B cell (primary cell): ENCODE measurements at regions of chr12 and their contacts with region 1.

Region 1: GRCh38 chr12:50174971-50175715 is 8.0 kb upstream of the CERS5 start:
- DNase-seq: peak; percentile 73
- ATAC-seq: no peak
- H3K4me3 ChIP-seq: no peak overlapping the region
- H3K4me3 Mint-ChIP-seq: no peak overlapping the region
- H3K27ac ChIP-seq: no peak overlapping the region
- H3K27ac Mint-ChIP-seq: no peak overlapping the region
- H3K4me1 ChIP-seq: no peaks in the 10 kb centered on the region
- H3K4me1 Mint-ChIP-seq: no peaks in the 10 kb centered on the region
- H3K27me3 ChIP-seq: no peaks in the 10 kb centered on the region
- H3K27me3 Mint-ChIP-seq: no peaks in the 10 kb centered on the region
- CTCF ChIP-seq: peak; percentile 93

Region 2: DNA sequence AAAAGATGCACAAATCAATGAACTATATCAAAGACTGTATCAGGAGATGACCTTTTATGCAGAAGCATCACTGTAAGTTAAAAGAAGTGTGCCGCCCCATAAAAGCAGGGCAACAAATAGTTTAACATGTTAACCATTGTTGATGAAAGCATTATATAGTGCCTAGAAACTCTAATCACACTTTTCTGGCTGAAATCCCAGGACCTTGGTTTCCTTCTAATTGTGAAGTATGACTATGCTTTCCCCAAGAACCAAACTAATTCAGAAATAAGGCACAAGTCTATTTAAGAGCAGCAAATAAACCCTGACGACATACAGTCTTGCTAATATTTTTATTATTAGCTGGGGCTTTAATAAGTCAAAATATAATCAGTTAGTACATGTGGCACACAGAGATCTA is 171.5 kb before region 1 on chr12:
- CTCF ChIA-PET with region 1: no interaction called
- POLR2A ChIA-PET with region 1: no interaction called
- intact Hi-C with region 1: no loop called
- DNase-seq: no peak
- ATAC-seq: no peak
- H3K4me3 ChIP-seq: no peak overlapping the region
- H3K4me3 Mint-ChIP-seq: no peak overlapping the region
- H3K27ac ChIP-seq: no peak overlapping the region
- H3K27ac Mint-ChIP-seq: no peak overlapping the region
- H3K4me1 ChIP-seq: peaks cover 3 to 7% of the 10 kb centered on the region in 2 donors
- H3K4me1 Mint-ChIP-seq: peaks cover 13% of the 10 kb centered on the region
- H3K27me3 ChIP-seq: no peaks in the 10 kb centered on the region
- H3K27me3 Mint-ChIP-seq: no peaks in the 10 kb centered on the region
- CTCF ChIP-seq: no peak

Region 3: DNA sequence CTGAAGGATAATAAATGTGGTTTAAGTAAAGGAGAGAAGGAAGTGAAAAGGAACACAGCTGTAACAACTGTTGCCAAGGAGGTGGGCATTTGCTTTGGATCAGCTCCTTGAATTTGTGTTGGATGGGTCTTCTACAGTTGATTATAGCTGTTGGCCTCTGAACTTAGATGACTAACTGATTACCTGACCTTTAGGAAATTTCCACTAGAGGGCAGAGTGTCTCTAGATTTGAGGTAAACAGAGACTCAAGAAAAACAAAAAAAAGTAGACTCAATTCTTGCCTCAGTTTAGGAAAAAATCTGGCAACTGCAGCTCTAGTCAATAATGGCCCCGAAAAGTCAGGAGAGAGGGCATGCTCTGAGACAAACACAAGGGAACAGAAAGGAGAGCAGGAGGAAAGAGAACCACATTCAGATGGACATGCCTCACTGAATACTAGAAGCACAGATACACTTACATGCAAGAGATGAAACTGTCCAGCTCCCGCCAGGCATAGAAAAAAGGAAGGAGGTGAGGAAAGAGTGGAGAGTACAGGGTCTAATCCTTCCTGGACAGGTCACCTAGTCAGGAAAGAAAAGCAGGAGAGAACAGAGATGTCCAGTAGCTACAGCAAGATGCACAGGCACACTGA is 42.5 kb before region 1 on chr12:
- CTCF ChIA-PET with region 1: interaction called, 48 read pairs
- POLR2A ChIA-PET with region 1: no interaction called
- intact Hi-C with region 1: loop called (anchors 1 kb)
- DNase-seq: peak; percentile 42
- ATAC-seq: no peak
- H3K4me3 ChIP-seq: no peak overlapping the region
- H3K4me3 Mint-ChIP-seq: no peak overlapping the region
- H3K27ac ChIP-seq: peak overlapping the region in 1 of 2 donors; percentile 35
- H3K27ac Mint-ChIP-seq: peak overlapping the region; percentile 8
- H3K4me1 ChIP-seq: peaks cover 6 to 7% of the 10 kb centered on the region in 2 donors
- H3K4me1 Mint-ChIP-seq: peaks cover 14% of the 10 kb centered on the region
- H3K27me3 ChIP-seq: no peaks in the 10 kb centered on the region
- H3K27me3 Mint-ChIP-seq: no peaks in the 10 kb centered on the region
- CTCF ChIP-seq: peak; percentile 48